IMR-90 (cell line): ENCODE measurements at regions of chr17 and their contacts with region 1.

Region 1: GRCh38 chr17:8986290-8986689 is 20.8 kb upstream of the PIK3R5 start:
- DNase-seq: no peak
- ATAC-seq: no peak
- H3K4me3 ChIP-seq: no peak overlapping the region
- H3K27ac ChIP-seq: no peak overlapping the region
- H3K4me1 ChIP-seq: no peaks in the 10 kb centered on the region
- H3K27me3 ChIP-seq: no peaks in the 10 kb centered on the region
- CTCF ChIP-seq: no peak
- POLR2A ChIP-seq: no peak
- RAD21 ChIP-seq: no peak

Region 2: GRCh38 chr17:9529033-9529700 is 542.9 kb after region 1 on chr17:
- CTCF ChIA-PET with region 1: no interaction called
- POLR2A ChIA-PET with region 1: no interaction called
- dilution Hi-C with region 1: no loop called
- in situ Hi-C with region 1: loop called (anchors 5 kb)
- intact Hi-C with region 1: loop called (anchors 1 kb)
- DNase-seq: peak; percentile 56
- ATAC-seq: peak; percentile 88
- H3K4me3 ChIP-seq: no peak overlapping the region
- H3K27ac ChIP-seq: no peak overlapping the region
- H3K4me1 ChIP-seq: no peaks in the 10 kb centered on the region
- H3K27me3 ChIP-seq: no peaks in the 10 kb centered on the region
- CTCF ChIP-seq: peak; percentile 74
- POLR2A ChIP-seq: no peak
- RAD21 ChIP-seq: peak; percentile 82